ENCODE measurements at regions of chr1 and their contacts with region 1.

Region 1: DNA sequence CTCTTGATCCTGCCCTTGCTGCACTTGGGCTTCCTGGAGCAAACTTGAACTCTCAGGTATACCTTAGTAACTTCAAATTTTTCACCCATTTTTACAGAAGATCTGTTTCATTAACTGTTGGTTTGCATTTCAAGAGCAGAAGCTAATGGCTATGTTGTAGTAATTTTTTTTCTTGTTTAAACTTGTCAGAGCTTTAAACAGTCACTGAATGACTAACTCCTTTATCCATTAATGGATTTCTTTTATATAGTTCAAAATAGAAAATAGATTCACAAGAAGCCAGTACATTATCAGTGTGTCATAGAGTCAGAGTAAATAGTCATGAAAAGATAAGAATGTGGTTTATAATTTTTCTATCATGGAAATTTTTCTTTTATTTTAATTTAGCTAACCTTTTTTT is 13.6 kb downstream of the SRSF11 start:
- DNase-seq: no peak
- ATAC-seq: no peak
- H3K4me3 ChIP-seq: no peak overlapping the region
- H3K27ac ChIP-seq: no peak overlapping the region
- H3K4me1 ChIP-seq: no peaks in the 10 kb centered on the region
- H3K27me3 ChIP-seq: no peaks in the 10 kb centered on the region
- CTCF ChIP-seq: no peak
- EP300 ChIP-seq: no peak
- POLR2A ChIP-seq: no peak
- RAD21 ChIP-seq: no peak

Region 2: GRCh38 chr1:71074681-71075080 is 839.9 kb after region 1 on chr1:
- CTCF ChIA-PET with region 1: no interaction called
- POLR2A ChIA-PET with region 1: no interaction called
- RAD21 ChIA-PET with region 1: no interaction called
- SMC1A ChIA-PET with region 1: no interaction called
- in situ Hi-C with region 1: loop called (anchors 10 kb)
- intact Hi-C with region 1: no loop called
- DNase-seq: no peak
- ATAC-seq: peak; percentile 62
- H3K4me3 ChIP-seq: no peak overlapping the region
- H3K27ac ChIP-seq: no peak overlapping the region
- H3K4me1 ChIP-seq: no peaks in the 10 kb centered on the region
- H3K27me3 ChIP-seq: no peaks in the 10 kb centered on the region
- CTCF ChIP-seq: no peak
- EP300 ChIP-seq: no peak
- POLR2A ChIP-seq: no peak
- RAD21 ChIP-seq: no peak

Measured in GM12878 (cell line).